Activated CD8-positive, alpha-beta T cell treated with anti-CD3 and anti-CD28 coated beads for 36 hours (primary cell): ENCODE measurements at regions of chr14 and their contacts with region 1.

Region 1: DNA sequence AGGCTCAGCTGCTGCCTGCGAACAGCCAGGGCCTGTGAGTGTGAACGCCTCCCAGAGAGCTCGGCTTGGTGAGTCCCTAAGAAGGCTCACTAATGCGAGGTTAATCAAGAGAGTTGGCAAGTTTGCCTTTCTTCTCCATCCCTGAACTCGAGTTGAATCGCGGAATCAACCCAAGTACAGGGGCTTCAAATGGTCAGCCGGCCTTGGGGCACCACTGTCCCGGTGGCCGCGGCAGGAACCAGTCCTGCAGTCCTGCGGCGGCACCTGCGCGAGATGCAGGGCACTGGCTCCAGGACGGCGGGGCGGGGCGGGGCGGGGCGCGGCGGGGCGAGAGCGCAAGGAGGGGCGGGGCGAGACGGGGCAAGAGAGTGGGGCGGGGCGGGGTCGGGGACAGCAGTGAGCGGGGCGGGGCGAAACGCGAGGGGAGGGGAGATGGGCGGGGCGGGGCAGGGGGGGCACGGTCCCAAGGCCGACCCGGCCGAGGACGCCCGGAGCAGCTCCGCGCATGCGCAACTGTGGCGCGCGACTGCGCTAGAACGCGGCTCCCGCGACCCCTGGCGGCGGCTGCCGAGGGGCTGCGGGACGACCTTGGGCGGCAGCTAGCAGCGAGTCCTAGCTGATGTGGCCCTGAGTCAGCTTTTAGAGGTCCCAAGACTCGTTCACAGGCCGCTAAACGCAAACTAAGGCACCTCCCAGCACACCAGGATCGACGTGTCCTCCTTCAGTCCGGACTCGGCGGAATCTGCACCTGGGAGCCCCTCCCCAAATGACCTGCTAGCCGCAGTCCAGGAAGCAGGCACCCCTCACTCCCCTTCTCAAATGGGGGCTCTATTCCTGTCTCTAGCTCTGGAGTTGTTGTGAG is 58.0 kb downstream of the TTC7B start:
- DNase-seq: peak; percentile 92
- ATAC-seq: peak; percentile 92
- H3K4me3 Mint-ChIP-seq: peak overlapping the region; percentile 75
- H3K27ac Mint-ChIP-seq: peak overlapping the region; percentile 77
- H3K4me1 Mint-ChIP-seq: peaks cover 15% of the 10 kb centered on the region
- H3K27me3 Mint-ChIP-seq: no peaks in the 10 kb centered on the region
- CTCF ChIP-seq: peak; percentile 73

Region 2: DNA sequence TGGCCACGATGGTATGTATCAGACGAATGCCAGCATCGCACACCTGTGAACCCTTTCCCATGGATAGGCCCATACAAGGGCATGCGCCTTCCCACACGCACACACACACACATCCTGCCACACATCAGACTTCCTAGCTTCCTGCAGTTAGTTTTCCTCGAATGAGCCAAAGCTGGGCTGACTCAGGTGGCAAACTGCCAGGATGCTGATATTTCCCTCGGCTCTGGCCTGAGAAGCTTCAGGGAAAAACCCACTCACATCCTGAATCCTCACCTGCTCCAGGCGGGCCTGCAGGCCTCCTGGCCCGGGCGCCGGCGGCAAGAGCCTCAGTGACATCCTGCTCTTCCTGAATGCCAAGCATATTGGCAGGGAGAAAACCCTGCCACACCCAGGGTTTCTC is 339.1 kb before region 1 on chr14:
- CTCF ChIA-PET with region 1: no interaction called
- POLR2A ChIA-PET with region 1: no interaction called
- intact Hi-C with region 1: no loop called
- DNase-seq: no peak
- ATAC-seq: no peak
- H3K4me3 Mint-ChIP-seq: no peak overlapping the region
- H3K27ac Mint-ChIP-seq: no peak overlapping the region
- H3K4me1 Mint-ChIP-seq: peaks cover 3% of the 10 kb centered on the region
- H3K27me3 Mint-ChIP-seq: no peaks in the 10 kb centered on the region
- CTCF ChIP-seq: no peak

Region 3: GRCh38 chr14:90742729-90743128 is 15.5 kb before region 1 on chr14:
- CTCF ChIA-PET with region 1: interaction called, 24 read pairs
- POLR2A ChIA-PET with region 1: interaction called, 3 read pairs
- intact Hi-C with region 1: no loop called
- DNase-seq: no peak
- ATAC-seq: no peak
- H3K4me3 Mint-ChIP-seq: no peak overlapping the region
- H3K27ac Mint-ChIP-seq: no peak overlapping the region
- H3K4me1 Mint-ChIP-seq: no peaks in the 10 kb centered on the region
- H3K27me3 Mint-ChIP-seq: no peaks in the 10 kb centered on the region
- CTCF ChIP-seq: no peak

Region 4: GRCh38 chr14:90773705-90774104 is 15.4 kb after region 1 on chr14:
- CTCF ChIA-PET with region 1: interaction called, 52 read pairs
- POLR2A ChIA-PET with region 1: no interaction called
- intact Hi-C with region 1: no loop called
- DNase-seq: no peak
- ATAC-seq: no peak
- H3K4me3 Mint-ChIP-seq: no peak overlapping the region
- H3K27ac Mint-ChIP-seq: no peak overlapping the region
- H3K4me1 Mint-ChIP-seq: no peaks in the 10 kb centered on the region
- H3K27me3 Mint-ChIP-seq: no peaks in the 10 kb centered on the region
- CTCF ChIP-seq: no peak

Region 5: DNA sequence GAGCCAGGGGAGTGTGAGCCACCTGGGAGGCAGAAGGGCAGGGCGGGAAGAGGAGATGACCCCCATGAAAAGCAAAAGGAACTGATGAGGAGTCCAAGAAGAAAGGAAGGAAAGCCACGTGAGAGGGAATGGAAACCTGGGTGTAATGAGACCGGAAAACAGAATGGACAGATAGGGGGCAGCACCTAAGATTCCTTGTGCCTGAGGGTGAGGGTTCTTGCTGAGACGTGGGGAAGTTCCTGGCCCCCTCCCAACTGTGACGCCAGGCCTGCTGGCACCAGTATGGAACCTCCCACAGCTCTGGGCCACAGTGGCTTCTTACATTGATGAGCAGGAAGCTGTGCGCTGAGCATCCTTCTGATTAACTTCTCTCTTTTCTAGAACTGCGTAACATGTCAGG is 27.2 kb after region 1 on chr14:
- CTCF ChIA-PET with region 1: interaction called, 22 read pairs
- POLR2A ChIA-PET with region 1: no interaction called
- intact Hi-C with region 1: no loop called
- DNase-seq: no peak
- ATAC-seq: no peak
- H3K4me3 Mint-ChIP-seq: no peak overlapping the region
- H3K27ac Mint-ChIP-seq: no peak overlapping the region
- H3K4me1 Mint-ChIP-seq: no peaks in the 10 kb centered on the region
- H3K27me3 Mint-ChIP-seq: no peaks in the 10 kb centered on the region
- CTCF ChIP-seq: no peak